ENCODE measurements at regions of chr1 and their contacts with region 1.

Region 1: DNA sequence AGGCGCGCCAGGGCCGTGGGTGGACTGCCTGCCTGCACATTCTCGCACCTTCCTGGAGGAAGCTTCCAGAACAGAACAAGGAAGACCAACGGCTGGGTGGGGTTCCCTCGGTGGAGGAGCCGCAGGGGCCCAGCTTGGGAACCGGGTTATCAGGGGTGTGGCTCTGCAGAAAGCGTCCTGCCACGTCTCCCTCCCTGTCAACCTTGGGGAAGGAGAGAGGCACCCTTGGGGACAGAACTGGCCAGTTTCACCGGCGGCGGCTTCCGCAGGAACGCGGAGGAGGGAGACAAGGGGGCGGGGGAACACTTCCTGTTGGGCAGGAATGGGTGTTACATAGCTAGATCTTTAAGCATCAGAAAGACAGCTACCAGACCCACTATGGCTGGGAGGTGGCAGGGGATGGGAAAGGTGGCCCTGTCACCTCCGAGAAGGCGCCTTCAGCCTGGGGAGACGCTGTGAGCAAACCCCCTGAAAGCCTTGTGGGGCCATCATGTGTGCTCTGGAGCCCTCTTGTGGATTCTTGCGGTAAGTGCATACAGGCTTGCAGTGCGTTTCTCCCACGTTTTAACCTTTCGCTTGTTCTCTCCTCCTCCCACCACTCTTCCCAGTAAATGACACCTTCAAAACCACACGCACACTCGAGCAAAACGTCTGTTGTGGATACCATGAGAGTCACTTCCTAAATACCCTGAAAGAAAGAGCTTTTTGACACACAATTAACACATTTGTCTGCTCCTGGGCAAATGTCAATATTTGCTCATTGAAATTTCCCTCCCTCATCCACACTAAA is 3.8 kb upstream of the PLEKHA6 start:
- DNase-seq: peak; percentile 74 to 93
- H3K4me3 ChIP-seq: peak overlapping the region; percentile 36 to 47 (median 46)
- H3K27ac ChIP-seq: peak overlapping the region; percentile 58 to 76 (median 70)
- H3K4me1 ChIP-seq: peaks cover 35 to 54% (median 38%) of the 10 kb centered on the region in 4 donors
- H3K27me3 ChIP-seq: peaks cover 0 to 19% (median 0%) of the 10 kb centered on the region in 3 donors
- CTCF ChIP-seq: peak in 6 of 7 experiments; percentile 89 to 99 (median 97)
- EP300 ChIP-seq: no peak
- POLR2A ChIP-seq: no peak

Region 2: GRCh38 chr1:204162231-204163074 is 201.1 kb before region 1 on chr1:
- intact Hi-C with region 1: loop called (anchors 5 kb)
- DNase-seq: peak; percentile 88 to 92
- H3K4me3 ChIP-seq: no peak overlapping the region
- H3K27ac ChIP-seq: no peak overlapping the region
- H3K4me1 ChIP-seq: peaks cover 6 to 9% (median 7%) of the 10 kb centered on the region in 4 donors
- H3K27me3 ChIP-seq: peaks cover 0 to 21% (median 0%) of the 10 kb centered on the region in 3 donors
- CTCF ChIP-seq: peak in 6 of 7 experiments; percentile 51 to 99 (median 98)
- EP300 ChIP-seq: no peak
- POLR2A ChIP-seq: no peak

Region 3: GRCh38 chr1:204213668-204214662 is 149.6 kb before region 1 on chr1 and contains the start of gene GOLT1A:
- intact Hi-C with region 1: loop called (anchors 5 kb)
- DNase-seq: peak; percentile 91 to 95
- H3K4me3 ChIP-seq: peak within 1 kb of the TSS; percentile 7 to 36 (median 24)
- H3K27ac ChIP-seq: peak within 1 kb of the TSS; percentile 16 to 66 (median 47)
- H3K4me1 ChIP-seq: peaks cover 9 to 15% (median 14%) of the 10 kb centered on the region in 4 donors
- H3K27me3 ChIP-seq: peaks cover 0 to 11% (median 0%) of the 10 kb centered on the region in 3 donors
- CTCF ChIP-seq: peak in 5 of 7 experiments; percentile 35 to 53 (median 51)
- EP300 ChIP-seq: no peak
- POLR2A ChIP-seq: no peak
- total RNA-seq, gene GOLT1A: 1.8 to 7.1 (median 5.9) TPM in 3 of 5 donors, not detected in the others

Region 4: GRCh38 chr1:204257954-204258752 is 105.4 kb before region 1 on chr1:
- intact Hi-C with region 1: loop called (anchors 5 kb)
- DNase-seq: peak; percentile 67 to 83
- H3K4me3 ChIP-seq: no peak overlapping the region
- H3K27ac ChIP-seq: peak overlapping the region in 1 of 5 donors; percentile 22
- H3K4me1 ChIP-seq: peaks cover 30 to 63% (median 43%) of the 10 kb centered on the region in 4 donors
- H3K27me3 ChIP-seq: no peaks in the 10 kb centered on the region
- CTCF ChIP-seq: peak in 5 of 7 experiments; percentile 53 to 73 (median 61)
- EP300 ChIP-seq: no peak
- POLR2A ChIP-seq: no peak

Region 5: DNA sequence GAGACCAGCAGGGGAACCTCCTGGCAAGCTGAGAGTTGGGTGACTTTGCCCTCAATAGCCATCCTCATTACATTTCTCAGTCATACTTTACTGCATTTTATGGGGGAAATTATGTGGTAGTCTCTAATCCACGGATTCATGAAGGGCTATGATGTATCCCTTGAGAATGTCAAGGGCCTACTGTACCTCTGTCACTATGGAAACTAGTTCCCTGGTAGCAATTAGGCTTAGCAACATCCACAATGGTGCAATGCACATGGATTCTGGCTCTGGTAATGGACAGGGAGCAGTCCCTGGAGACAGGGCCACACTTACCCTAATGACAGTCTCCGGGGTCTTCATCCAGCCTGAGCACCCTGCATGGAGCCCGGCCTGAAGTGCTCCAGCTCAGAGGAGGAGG is 295.5 kb after region 1 on chr1:
- intact Hi-C with region 1: no loop called
- DNase-seq: no peak
- H3K4me3 ChIP-seq: no peak overlapping the region
- H3K27ac ChIP-seq: no peak overlapping the region
- H3K4me1 ChIP-seq: peaks cover 0 to 4% (median 0%) of the 10 kb centered on the region in 4 donors
- H3K27me3 ChIP-seq: peaks cover 0 to 9% (median 0%) of the 10 kb centered on the region in 3 donors
- CTCF ChIP-seq: no peak
- EP300 ChIP-seq: no peak
- POLR2A ChIP-seq: no peak

Region 6: GRCh38 chr1:204782118-204782700 is 418.7 kb after region 1 on chr1:
- intact Hi-C with region 1: no loop called
- DNase-seq: no peak
- H3K4me3 ChIP-seq: no peak overlapping the region
- H3K27ac ChIP-seq: no peak overlapping the region
- H3K4me1 ChIP-seq: no peaks in the 10 kb centered on the region
- H3K27me3 ChIP-seq: peaks cover 0 to 26% (median 0%) of the 10 kb centered on the region in 3 donors
- CTCF ChIP-seq: no peak
- EP300 ChIP-seq: no peak
- POLR2A ChIP-seq: no peak